ENCODE measurements at regions of chr7 and their contacts with region 1.

Region 1: GRCh38 chr7:92447345-92448204 is at the start of gene GATAD1:
- DNase-seq: peak; percentile 91
- H3K4me3 ChIP-seq: peak within 1 kb of the TSS; percentile 94
- H3K27ac ChIP-seq: peak within 1 kb of the TSS; percentile 93
- H3K4me1 ChIP-seq: peaks cover 7% of the 10 kb centered on the region
- H3K27me3 ChIP-seq: no peaks in the 10 kb centered on the region
- CTCF ChIP-seq: peak; percentile 92
- total RNA-seq, gene GATAD1: 19.4 and 23.3 TPM in 2 replicates

Region 2: DNA sequence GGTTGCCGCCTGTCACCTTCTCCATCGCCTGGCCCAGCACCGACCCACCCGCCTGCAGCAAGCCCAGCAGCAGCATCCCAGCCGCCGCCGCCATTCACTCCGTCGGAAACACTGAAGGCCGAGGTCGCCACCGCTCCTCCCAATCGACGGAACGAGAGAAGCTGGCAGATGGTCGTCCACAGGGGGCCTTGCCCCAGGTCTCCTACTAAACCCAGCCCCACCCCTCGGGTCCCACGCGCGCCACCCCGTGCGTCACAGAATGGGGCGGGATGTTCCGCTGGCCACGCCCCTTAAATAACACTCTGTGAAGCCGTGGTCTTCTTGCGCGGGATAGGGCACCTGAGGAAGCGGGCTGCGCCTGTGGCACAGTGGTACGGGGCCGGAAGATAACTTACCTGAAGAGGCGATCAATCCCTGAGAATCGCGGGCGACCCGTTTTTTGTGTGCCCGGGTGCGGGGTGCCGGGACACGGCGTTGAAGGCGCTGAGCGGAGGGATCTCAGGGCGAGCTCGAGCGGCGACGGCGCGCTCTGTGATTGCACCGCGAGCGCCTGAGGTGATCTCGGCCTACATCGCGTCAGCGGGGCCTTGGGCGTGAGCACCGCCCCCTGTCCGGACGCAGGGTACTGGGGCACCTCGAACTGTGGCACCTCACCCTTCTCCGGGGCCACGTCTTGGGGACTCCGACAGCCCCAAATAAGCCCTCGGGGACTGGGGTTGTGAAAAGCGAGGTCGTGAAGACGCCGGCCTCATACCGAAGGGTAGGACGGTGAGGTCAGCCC is 313.1 kb before region 1 on chr7 and contains the start of gene CYP51A1:
- CTCF ChIA-PET with region 1: no interaction called
- POLR2A ChIA-PET with region 1: no interaction called
- intact Hi-C with region 1: loop called (anchors 5 kb)
- DNase-seq: peak; percentile 96
- H3K4me3 ChIP-seq: peak within 1 kb of the TSS; percentile 94
- H3K27ac ChIP-seq: peak within 1 kb of the TSS; percentile 99
- H3K4me1 ChIP-seq: peaks cover 12% of the 10 kb centered on the region
- H3K27me3 ChIP-seq: no peaks in the 10 kb centered on the region
- CTCF ChIP-seq: no peak
- total RNA-seq, gene CYP51A1: 123 and 150 TPM in 2 replicates

Region 3: GRCh38 chr7:92178927-92179924 is 268.3 kb before region 1 on chr7 and contains the start of gene LRRD1:
- CTCF ChIA-PET with region 1: no interaction called
- POLR2A ChIA-PET with region 1: no interaction called
- intact Hi-C with region 1: loop called (anchors 5 kb)
- DNase-seq: peak; percentile 82
- H3K4me3 ChIP-seq: peak within 1 kb of the TSS; percentile 50
- H3K27ac ChIP-seq: no peak within 1 kb of the TSS
- H3K4me1 ChIP-seq: no peaks in the 10 kb centered on the region
- H3K27me3 ChIP-seq: no peaks in the 10 kb centered on the region
- CTCF ChIP-seq: peak; percentile 98
- total RNA-seq, gene LRRD1: 0.11 TPM in 1 of 2 replicates, not detected in the other

Region 4: DNA sequence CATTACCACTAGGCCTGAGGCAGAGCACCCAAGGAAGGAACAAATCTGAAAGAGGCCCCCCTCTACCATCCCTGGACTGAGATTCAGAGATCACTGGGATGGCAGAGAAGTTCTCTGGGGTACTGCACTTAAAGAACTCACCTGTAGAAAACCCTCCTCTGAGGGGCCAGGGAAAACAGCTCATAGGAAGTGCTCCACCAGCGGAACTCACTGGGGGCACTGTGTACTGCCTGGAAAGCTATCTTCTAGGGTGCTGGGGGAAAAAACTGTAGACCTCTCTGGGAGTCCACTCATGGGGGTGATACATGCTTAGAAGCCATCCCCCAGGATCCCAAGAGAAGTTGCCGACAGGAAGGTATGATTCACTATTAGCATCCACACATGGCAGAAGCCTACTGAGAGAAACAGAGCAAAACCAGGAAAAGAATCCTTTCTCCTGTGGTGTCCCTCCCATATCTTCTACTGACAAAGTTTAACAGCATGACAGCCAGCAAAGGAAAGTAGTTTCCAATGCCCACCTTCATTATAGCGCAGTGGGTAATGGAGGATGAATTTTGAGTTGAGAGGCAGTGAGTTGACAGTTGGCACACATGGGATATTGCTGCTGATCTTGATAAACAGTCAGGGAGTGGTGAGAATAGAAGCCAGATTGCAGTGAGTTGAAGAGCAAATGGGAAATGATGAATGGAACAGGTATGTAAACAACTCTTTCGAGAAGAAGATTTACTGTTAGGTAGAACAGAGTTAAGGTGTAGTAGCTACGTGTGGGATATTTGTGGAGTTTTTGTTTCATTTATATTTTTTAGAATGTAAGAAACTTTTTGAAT is 180.9 kb before region 1 on chr7:
- CTCF ChIA-PET with region 1: no interaction called
- POLR2A ChIA-PET with region 1: no interaction called
- intact Hi-C with region 1: no loop called
- DNase-seq: no peak
- H3K4me3 ChIP-seq: no peak overlapping the region
- H3K27ac ChIP-seq: no peak overlapping the region
- H3K4me1 ChIP-seq: no peaks in the 10 kb centered on the region
- H3K27me3 ChIP-seq: no peaks in the 10 kb centered on the region
- CTCF ChIP-seq: no peak

Region 5: GRCh38 chr7:92423710-92424131 is 23.9 kb before region 1 on chr7:
- CTCF ChIA-PET with region 1: interaction called, 20 read pairs
- POLR2A ChIA-PET with region 1: no interaction called
- intact Hi-C with region 1: loop called (anchors 1 kb)
- DNase-seq: no peak
- H3K4me3 ChIP-seq: no peak overlapping the region
- H3K27ac ChIP-seq: no peak overlapping the region
- H3K4me1 ChIP-seq: peaks cover 3% of the 10 kb centered on the region
- H3K27me3 ChIP-seq: no peaks in the 10 kb centered on the region
- CTCF ChIP-seq: no peak

Region 6: GRCh38 chr7:92461027-92462003 is 13.7 kb after region 1 on chr7:
- CTCF ChIA-PET with region 1: interaction called, 11 read pairs
- POLR2A ChIA-PET with region 1: interaction called, 3 read pairs
- intact Hi-C with region 1: no loop called
- DNase-seq: peak; percentile 63
- H3K4me3 ChIP-seq: no peak overlapping the region
- H3K27ac ChIP-seq: no peak overlapping the region
- H3K4me1 ChIP-seq: no peaks in the 10 kb centered on the region
- H3K27me3 ChIP-seq: no peaks in the 10 kb centered on the region
- CTCF ChIP-seq: peak; percentile 90

Region 7: DNA sequence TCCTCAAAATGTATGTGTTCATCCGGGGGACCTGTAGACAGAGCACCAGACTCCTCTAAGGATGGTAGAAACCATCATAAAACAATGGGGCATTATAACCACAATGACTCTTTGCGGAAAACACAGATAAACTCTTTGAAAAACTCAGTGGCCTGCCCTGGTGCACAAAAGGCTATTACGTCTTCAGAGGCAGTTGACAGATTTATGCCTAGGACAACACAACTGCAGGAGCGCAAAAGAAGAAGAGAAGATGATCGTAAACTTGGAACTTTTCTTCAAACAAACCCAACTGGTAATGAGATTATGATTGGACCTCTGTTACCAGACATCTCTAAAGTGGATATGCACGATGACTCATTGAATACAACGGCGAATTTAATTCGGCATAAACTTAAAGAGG is 87.0 kb after region 1 on chr7:
- CTCF ChIA-PET with region 1: no interaction called
- POLR2A ChIA-PET with region 1: no interaction called
- intact Hi-C with region 1: no loop called
- DNase-seq: peak; percentile 72
- H3K4me3 ChIP-seq: no peak overlapping the region
- H3K27ac ChIP-seq: peak overlapping the region; percentile 2
- H3K4me1 ChIP-seq: peaks cover 15% of the 10 kb centered on the region
- H3K27me3 ChIP-seq: no peaks in the 10 kb centered on the region
- CTCF ChIP-seq: no peak

Region 8: DNA sequence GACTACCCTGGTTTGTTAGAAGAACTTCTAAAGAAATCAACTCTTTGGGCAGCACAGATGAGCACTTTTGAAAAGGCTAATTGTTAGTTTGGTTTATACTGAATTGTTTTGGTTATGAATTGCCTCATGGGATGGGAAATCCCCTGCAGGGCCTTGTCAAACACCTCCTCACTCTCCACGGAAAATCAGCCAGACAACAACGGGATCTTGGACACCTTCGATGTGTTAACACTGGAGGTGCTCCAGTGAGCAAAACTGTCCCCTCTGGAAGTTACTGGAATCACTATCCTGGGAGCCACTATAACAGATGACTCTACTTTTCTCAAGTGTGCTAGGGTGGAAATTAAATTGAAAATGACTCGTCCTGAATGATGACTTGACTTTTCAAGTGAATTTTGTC is 350.1 kb after region 1 on chr7:
- CTCF ChIA-PET with region 1: no interaction called
- POLR2A ChIA-PET with region 1: no interaction called
- intact Hi-C with region 1: no loop called
- DNase-seq: peak; percentile 12
- H3K4me3 ChIP-seq: no peak overlapping the region
- H3K27ac ChIP-seq: no peak overlapping the region
- H3K4me1 ChIP-seq: peaks cover 32% of the 10 kb centered on the region
- H3K27me3 ChIP-seq: no peaks in the 10 kb centered on the region
- CTCF ChIP-seq: no peak

Measured in A673 (cell line).